ENCODE measurements at regions of chr3 and their contacts with region 1.

Region 1: DNA sequence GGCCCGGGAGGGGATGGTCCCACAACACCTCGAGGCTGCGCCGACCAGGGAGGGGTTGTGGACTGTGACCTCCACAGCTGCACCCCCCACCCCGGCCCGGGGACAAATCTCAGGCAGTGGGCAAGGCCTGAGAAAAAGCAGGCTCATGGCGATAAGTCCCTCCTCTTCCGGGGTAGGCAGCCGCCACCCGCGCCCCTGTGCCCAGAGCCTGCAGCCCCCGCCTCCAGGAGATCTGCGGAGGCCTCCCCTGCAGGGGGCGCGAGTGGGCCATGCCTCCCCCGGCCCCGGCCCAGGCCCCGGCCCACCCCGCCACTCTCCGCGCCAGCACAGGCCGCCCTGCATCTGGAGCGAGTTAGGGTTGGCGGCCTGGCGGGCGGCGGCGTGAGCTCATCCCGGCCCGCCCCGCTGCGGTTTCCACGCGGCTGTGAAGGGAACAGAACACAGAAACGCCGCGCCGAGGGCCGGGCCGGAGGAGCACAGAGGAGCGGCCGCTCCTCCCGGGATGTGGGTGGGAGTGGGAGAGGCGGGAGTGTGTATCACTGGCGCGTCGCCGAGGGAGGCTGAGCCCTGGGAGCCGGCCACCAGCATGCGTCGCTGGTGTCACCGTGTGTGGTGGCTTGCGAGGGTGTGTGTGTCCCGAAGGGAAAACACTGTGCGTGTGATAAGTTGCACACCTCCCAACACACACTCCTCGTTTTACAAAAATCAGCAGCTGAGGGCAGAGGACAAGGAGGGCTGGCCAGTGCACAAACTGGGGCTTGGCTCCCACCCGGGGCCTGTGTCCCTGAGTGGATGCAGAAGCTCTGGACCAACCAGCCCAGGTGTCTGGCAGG is 17.2 kb downstream of the MYL3 start:
- DNase-seq: peak; percentile 80
- ATAC-seq: peak; percentile 86
- H3K4me3 Mint-ChIP-seq: peak overlapping the region; percentile 64; the same call in 1 of the 2 replicates
- H3K27ac Mint-ChIP-seq: no peak overlapping the region
- H3K4me1 Mint-ChIP-seq: peaks cover 13% of the 10 kb centered on the region
- H3K27me3 Mint-ChIP-seq: peaks cover 13% of the 10 kb centered on the region; the same call in 1 of the 2 replicates
- CTCF ChIP-seq: peak; percentile 44; the same call in 1 of the 2 replicates

Region 2: GRCh38 chr3:46681856-46682540 is 164.0 kb before region 1 on chr3:
- CTCF ChIA-PET with region 1: no interaction called
- POLR2A ChIA-PET with region 1: no interaction called
- DNase-seq: no peak
- ATAC-seq: no peak
- H3K4me3 Mint-ChIP-seq: no peak overlapping the region
- H3K27ac Mint-ChIP-seq: no peak overlapping the region
- H3K4me1 Mint-ChIP-seq: no peaks in the 10 kb centered on the region
- H3K27me3 Mint-ChIP-seq: no peaks in the 10 kb centered on the region
- CTCF ChIP-seq: no peak

Region 3: GRCh38 chr3:46705022-46705530 is 140.9 kb before region 1 on chr3:
- CTCF ChIA-PET with region 1: interaction called, 11 read pairs
- POLR2A ChIA-PET with region 1: no interaction called
- DNase-seq: peak; percentile 83
- ATAC-seq: peak; percentile 78
- H3K4me3 Mint-ChIP-seq: no peak overlapping the region
- H3K27ac Mint-ChIP-seq: no peak overlapping the region
- H3K4me1 Mint-ChIP-seq: peaks cover 11% of the 10 kb centered on the region
- H3K27me3 Mint-ChIP-seq: peaks cover 29% of the 10 kb centered on the region
- CTCF ChIP-seq: peak; percentile 97

Region 4: DNA sequence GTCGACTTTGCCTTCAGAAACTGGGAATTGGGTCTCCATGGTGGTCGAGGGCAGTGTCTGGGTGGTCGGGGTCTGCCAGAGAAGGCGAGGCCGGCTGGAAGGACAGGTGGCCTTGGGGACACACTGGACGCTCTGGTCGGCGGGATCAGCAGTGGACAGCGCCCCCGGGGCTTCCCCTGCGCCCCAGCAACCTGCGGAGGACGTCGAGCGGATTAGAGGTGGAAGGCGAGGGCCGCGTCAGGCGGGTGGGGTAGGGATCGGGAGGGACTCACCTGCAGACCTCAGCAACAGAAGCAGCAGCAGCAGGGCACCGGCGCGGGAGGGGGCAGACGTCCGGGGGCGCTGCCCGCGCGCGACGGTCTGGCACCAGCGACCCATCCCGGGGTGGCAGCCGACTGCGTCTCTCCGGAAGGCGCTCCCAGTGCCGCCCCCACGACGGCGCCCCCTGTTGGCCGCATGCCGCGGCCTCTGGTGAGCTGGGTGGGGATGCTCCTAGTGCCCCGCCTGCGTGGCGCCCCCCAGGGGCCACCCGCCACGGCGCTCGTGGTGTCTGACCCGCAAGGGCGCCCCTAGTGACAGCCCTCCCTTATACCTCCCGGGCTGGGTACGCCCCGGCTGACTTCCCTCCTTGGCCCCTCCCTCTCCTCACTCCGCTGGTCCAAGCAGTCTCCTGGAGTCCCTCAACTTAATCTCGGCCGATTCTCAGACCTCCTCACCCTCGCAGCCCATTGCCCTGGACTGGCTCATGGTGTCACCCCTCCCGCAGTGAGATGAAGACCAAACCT is 128.4 kb before region 1 on chr3 and contains the start of gene PRSS50:
- CTCF ChIA-PET with region 1: interaction called, 11 read pairs
- POLR2A ChIA-PET with region 1: no interaction called
- DNase-seq: peak; percentile 86
- ATAC-seq: peak; percentile 94
- H3K4me3 Mint-ChIP-seq: no peak within 1 kb of the TSS
- H3K27ac Mint-ChIP-seq: no peak within 1 kb of the TSS
- H3K4me1 Mint-ChIP-seq: no peaks in the 10 kb centered on the region
- H3K27me3 Mint-ChIP-seq: no peaks in the 10 kb centered on the region
- CTCF ChIP-seq: peak; percentile 94
- total RNA-seq, gene PRSS50: 0.70 to 1.4 TPM (median 1.2 TPM) in 3 replicates

Region 5: GRCh38 chr3:46895204-46895660 is 49.2 kb after region 1 on chr3:
- CTCF ChIA-PET with region 1: interaction called, 13 read pairs
- POLR2A ChIA-PET with region 1: interaction called, 5 read pairs
- DNase-seq: peak; percentile 63
- ATAC-seq: no peak
- H3K4me3 Mint-ChIP-seq: no peak overlapping the region
- H3K27ac Mint-ChIP-seq: no peak overlapping the region
- H3K4me1 Mint-ChIP-seq: peaks cover 11% of the 10 kb centered on the region
- H3K27me3 Mint-ChIP-seq: peaks cover 73% of the 10 kb centered on the region
- CTCF ChIP-seq: peak; percentile 52